RWPE1 (cell line): ENCODE measurements at regions of chr9 and their contacts with region 1.

Region 1: GRCh38 chr9:124126571-124127289 is 115.2 kb downstream of the LHX2 start:
- DNase-seq: peak; percentile 90
- H3K27ac ChIP-seq: no peak overlapping the region
- CTCF ChIP-seq: peak; percentile 99

Region 2: GRCh38 chr9:124110307-124110915 is 16.3 kb before region 1 on chr9:
- CTCF ChIA-PET with region 1: interaction called, 13 read pairs
- POLR2A ChIA-PET with region 1: no interaction called
- DNase-seq: peak; percentile 88
- H3K27ac ChIP-seq: no peak overlapping the region
- CTCF ChIP-seq: no peak

Region 3: GRCh38 chr9:124257844-124258606 is 131.3 kb after region 1 on chr9 and contains the start of gene NEK6:
- CTCF ChIA-PET with region 1: interaction called, 13 read pairs
- POLR2A ChIA-PET with region 1: no interaction called
- DNase-seq: no peak
- H3K27ac ChIP-seq: peak within 1 kb of the TSS; percentile 99
- CTCF ChIP-seq: no peak

Region 4: GRCh38 chr9:124320062-124320973 is 193.6 kb after region 1 on chr9:
- CTCF ChIA-PET with region 1: interaction called, 10 read pairs
- POLR2A ChIA-PET with region 1: no interaction called
- DNase-seq: peak; percentile 90
- H3K27ac ChIP-seq: peak overlapping the region; percentile 42
- CTCF ChIP-seq: peak; percentile 97